CD8-positive, alpha-beta memory T cell (primary cell): ENCODE measurements at regions of chr6 and their contacts with region 1.

Region 1: DNA sequence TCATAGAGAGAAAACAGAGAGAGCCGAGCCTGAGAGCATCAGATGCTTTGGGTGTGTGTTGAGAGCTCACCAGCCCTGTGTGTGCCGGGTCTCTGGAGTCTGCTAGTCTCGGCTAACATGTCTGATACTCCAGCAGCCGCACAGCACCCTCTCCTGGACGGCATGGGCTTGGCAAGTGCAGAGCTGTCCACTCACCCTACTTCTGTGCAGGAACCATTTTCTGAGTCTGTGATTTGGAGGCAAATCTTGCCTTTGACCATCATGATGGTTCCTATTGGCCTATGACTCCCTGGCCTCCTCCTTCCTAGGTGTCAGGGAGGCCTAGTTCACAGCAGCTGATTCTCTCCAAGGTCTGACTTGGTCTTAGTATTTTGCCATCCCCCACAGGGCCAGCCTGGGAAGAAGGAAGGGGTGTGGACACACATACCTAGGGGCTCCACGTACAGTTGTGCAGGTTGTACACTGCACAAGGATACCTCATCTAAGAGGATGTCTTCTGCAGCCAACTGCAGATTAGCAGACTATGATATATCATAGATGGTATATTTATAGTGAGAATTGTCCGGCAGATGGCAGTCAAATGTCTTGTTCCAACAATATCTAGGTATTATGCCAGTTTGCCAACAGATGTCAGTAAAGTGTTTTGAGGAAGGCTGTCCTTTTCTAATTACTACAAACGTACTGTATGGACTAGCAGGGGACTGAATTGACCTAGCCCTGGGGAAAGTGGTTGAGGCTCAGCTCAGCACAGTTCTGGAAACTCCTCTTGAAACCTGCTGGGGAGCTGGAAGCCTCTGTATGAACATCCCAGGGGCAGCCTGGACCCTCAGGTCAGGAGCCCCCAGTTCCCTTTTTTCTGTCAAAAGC is 13.0 kb downstream of the FGD2 start:
- DNase-seq: peak; percentile 77 to 93 (median 78)
- H3K4me3 ChIP-seq: no peak overlapping the region
- H3K4me3 Mint-ChIP-seq: peak overlapping the region in 3 of 7 donors; percentile 1 to 28 (median 14)
- H3K27ac ChIP-seq: no peak overlapping the region
- H3K27ac Mint-ChIP-seq: peak overlapping the region; percentile 44 to 91 (median 72)
- H3K4me1 ChIP-seq: peaks cover 37% of the 10 kb centered on the region
- H3K4me1 Mint-ChIP-seq: peaks cover 45 to 48% (median 46%) of the 10 kb centered on the region in 3 donors
- H3K27me3 ChIP-seq: no peaks in the 10 kb centered on the region
- H3K27me3 Mint-ChIP-seq: peaks cover 0 to 1% of the 10 kb centered on the region in 2 donors

Region 2: GRCh38 chr6:36765594-36766398 is 252.6 kb before region 1 on chr6:
- CTCF ChIA-PET with region 1: interaction called, 67 read pairs
- POLR2A ChIA-PET with region 1: no interaction called
- DNase-seq: peak; percentile 68 to 82 (median 69)
- H3K4me3 ChIP-seq: no peak overlapping the region
- H3K4me3 Mint-ChIP-seq: peak overlapping the region in 2 of 7 donors; percentile 29 to 40
- H3K27ac ChIP-seq: no peak overlapping the region
- H3K27ac Mint-ChIP-seq: peak overlapping the region in 7 of 8 donors; percentile 38 to 87 (median 52)
- H3K4me1 ChIP-seq: peaks cover 37% of the 10 kb centered on the region
- H3K4me1 Mint-ChIP-seq: peaks cover 31 to 35% (median 32%) of the 10 kb centered on the region in 3 donors
- H3K27me3 ChIP-seq: no peaks in the 10 kb centered on the region
- H3K27me3 Mint-ChIP-seq: peaks cover 0 to 2% of the 10 kb centered on the region in 2 donors

Region 3: GRCh38 chr6:36885461-36886401 is 132.7 kb before region 1 on chr6 and contains the start of gene C6orf89:
- CTCF ChIA-PET with region 1: interaction called, 93 read pairs
- POLR2A ChIA-PET with region 1: interaction called, 14 read pairs
- DNase-seq: peak; percentile 95 to 99 (median 97)
- H3K4me3 ChIP-seq: peak within 1 kb of the TSS; percentile 72
- H3K4me3 Mint-ChIP-seq: peak within 1 kb of the TSS; percentile 79 to 96 (median 91)
- H3K27ac ChIP-seq: peak within 1 kb of the TSS; percentile 82
- H3K27ac Mint-ChIP-seq: peak within 1 kb of the TSS; percentile 84 to 97 (median 96)
- H3K4me1 ChIP-seq: peaks cover 34% of the 10 kb centered on the region
- H3K4me1 Mint-ChIP-seq: peaks cover 32 to 50% (median 50%) of the 10 kb centered on the region in 3 donors
- H3K27me3 ChIP-seq: no peaks in the 10 kb centered on the region
- H3K27me3 Mint-ChIP-seq: no peaks in the 10 kb centered on the region
- total RNA-seq, gene C6orf89: 37.4 to 40.0 TPM

Region 4: DNA sequence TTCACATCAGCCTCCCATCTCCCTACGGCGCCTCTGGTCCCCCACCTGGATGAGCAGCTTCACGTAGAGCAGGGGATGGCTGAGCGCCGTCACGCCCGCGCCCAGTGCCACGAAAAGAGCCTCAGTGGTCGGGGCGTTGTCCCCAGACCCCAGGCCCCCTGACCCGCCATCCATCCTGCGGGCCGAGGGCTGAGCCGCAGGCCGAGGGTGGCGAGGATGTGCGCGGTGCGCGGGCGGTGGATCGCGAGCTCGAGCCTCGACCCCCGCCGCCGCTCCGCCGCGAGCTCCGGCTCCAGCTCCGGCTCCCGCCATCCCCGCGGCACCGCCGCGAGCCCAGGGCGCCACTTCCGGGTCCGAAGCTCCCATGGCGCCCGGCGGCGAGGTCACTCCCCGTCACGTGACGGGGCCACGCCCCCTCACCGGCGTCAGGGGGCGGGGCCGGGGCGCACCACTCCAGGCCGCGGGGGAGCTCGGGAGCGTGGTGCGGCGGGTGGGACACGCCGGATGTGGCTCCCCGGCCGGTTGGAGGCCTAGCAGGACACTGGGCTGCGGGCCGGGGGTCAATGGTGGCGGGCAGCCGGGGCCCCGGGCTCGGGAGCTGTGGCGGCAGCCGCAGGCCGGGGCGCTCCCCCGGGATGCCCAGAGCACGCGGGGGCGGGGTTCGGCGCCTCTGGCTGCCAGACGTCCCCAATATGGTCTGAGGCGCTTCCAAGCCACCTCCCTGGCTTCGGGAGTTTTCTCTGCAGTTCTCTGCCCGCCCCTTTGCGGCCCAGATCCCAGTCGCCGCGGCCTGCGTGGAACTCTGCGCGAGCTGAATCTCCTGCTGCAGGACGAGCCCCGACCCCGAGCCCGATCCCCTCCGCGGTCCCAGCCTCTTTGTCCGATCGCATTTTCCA is 32.4 kb before region 1 on chr6 and contains the start of gene MTCH1:
- CTCF ChIA-PET with region 1: interaction called, 17 read pairs
- POLR2A ChIA-PET with region 1: interaction called, 6 read pairs
- DNase-seq: peak; percentile 84 to 92 (median 90)
- H3K4me3 ChIP-seq: peak within 1 kb of the TSS; percentile 91
- H3K4me3 Mint-ChIP-seq: peak within 1 kb of the TSS in 5 of 7 donors; percentile 90 to 99 (median 97)
- H3K27ac ChIP-seq: peak within 1 kb of the TSS; percentile 82
- H3K27ac Mint-ChIP-seq: peak within 1 kb of the TSS; percentile 87 to 99 (median 97)
- H3K4me1 ChIP-seq: peaks cover 37% of the 10 kb centered on the region
- H3K4me1 Mint-ChIP-seq: peaks cover 20 to 28% (median 22%) of the 10 kb centered on the region in 3 donors
- H3K27me3 ChIP-seq: no peaks in the 10 kb centered on the region
- H3K27me3 Mint-ChIP-seq: peaks cover 0 to 11% of the 10 kb centered on the region in 2 donors
- total RNA-seq, gene MTCH1: 116 to 126 TPM

Region 5: DNA sequence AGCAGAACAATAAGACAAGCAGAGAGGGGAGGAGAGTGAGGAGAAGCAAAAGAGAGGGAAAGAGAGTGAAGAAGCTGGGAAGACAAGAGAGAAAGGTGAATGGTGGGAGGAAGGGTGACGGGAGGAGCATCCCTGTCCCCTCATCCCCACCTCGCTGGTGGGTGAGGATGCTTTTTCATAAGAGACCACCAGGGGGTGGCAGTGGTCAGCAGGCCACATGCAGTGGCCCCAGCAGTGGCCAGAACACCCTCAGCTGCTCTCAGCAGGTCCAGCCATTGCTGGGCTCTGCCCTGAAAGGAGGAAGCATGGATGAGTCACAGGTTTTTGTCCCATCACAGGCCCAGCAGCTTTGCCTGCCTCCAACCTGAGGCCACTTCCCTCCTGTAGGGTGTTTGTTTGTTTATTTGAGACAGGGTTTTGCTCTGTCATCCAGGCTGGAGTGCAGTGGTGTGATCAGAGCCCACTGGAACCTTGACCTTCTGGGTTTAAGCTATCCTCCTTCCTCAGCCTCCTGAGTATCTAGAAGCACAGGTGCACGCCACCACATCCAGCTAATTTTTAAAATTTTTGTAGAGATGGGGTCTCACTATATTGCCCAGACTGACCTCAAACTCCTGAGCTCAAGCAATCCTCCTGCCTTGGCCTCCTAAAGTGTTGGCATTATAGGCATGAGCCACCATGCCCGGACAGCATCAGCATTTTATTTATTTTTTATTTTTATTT is 11.0 kb after region 1 on chr6:
- CTCF ChIA-PET with region 1: interaction called, 61 read pairs
- POLR2A ChIA-PET with region 1: interaction called, 4 read pairs
- DNase-seq: peak in 4 of 5 donors; percentile 30 to 62 (median 42)
- H3K4me3 ChIP-seq: no peak overlapping the region
- H3K4me3 Mint-ChIP-seq: peak overlapping the region in 1 of 7 donors; percentile 1
- H3K27ac ChIP-seq: no peak overlapping the region
- H3K27ac Mint-ChIP-seq: peak overlapping the region in 6 of 8 donors; percentile 43 to 90 (median 70)
- H3K4me1 ChIP-seq: peaks cover 6% of the 10 kb centered on the region
- H3K4me1 Mint-ChIP-seq: peaks cover 23 to 33% (median 26%) of the 10 kb centered on the region in 3 donors
- H3K27me3 ChIP-seq: no peaks in the 10 kb centered on the region
- H3K27me3 Mint-ChIP-seq: no peaks in the 10 kb centered on the region

Region 6: GRCh38 chr6:37169496-37170272 is 151.3 kb after region 1 on chr6 and contains the start of gene PIM1:
- CTCF ChIA-PET with region 1: interaction called, 461 read pairs
- POLR2A ChIA-PET with region 1: interaction called, 40 read pairs
- DNase-seq: peak; percentile 92 to 99 (median 98)
- H3K4me3 ChIP-seq: peak within 1 kb of the TSS; percentile 68
- H3K4me3 Mint-ChIP-seq: peak within 1 kb of the TSS; percentile 90 to 99 (median 94)
- H3K27ac ChIP-seq: peak within 1 kb of the TSS; percentile 89
- H3K27ac Mint-ChIP-seq: peak within 1 kb of the TSS; percentile 91 to 98 (median 96)
- H3K4me1 ChIP-seq: peaks cover 29% of the 10 kb centered on the region
- H3K4me1 Mint-ChIP-seq: peaks cover 40 to 42% (median 41%) of the 10 kb centered on the region in 3 donors
- H3K27me3 ChIP-seq: no peaks in the 10 kb centered on the region
- H3K27me3 Mint-ChIP-seq: peaks cover 0 to 3% of the 10 kb centered on the region in 2 donors
- total RNA-seq, gene PIM1: 93.7 to 99.1 TPM

Region 7: GRCh38 chr6:37207903-37208456 is 189.5 kb after region 1 on chr6:
- CTCF ChIA-PET with region 1: interaction called, 615 read pairs
- POLR2A ChIA-PET with region 1: interaction called, 4 read pairs
- DNase-seq: peak; percentile 79 to 92 (median 80)
- H3K4me3 ChIP-seq: no peak overlapping the region
- H3K4me3 Mint-ChIP-seq: peak overlapping the region in 5 of 7 donors; percentile 20 to 90 (median 51)
- H3K27ac ChIP-seq: no peak overlapping the region
- H3K27ac Mint-ChIP-seq: peak overlapping the region in 7 of 8 donors; percentile 41 to 95 (median 76)
- H3K4me1 ChIP-seq: peaks cover 50% of the 10 kb centered on the region
- H3K4me1 Mint-ChIP-seq: peaks cover 49 to 60% (median 59%) of the 10 kb centered on the region in 3 donors
- H3K27me3 ChIP-seq: no peaks in the 10 kb centered on the region
- H3K27me3 Mint-ChIP-seq: no peaks in the 10 kb centered on the region